Ovary (tissue), 10 donors: ENCODE measurements at regions of chr2 and their contacts with region 1.

Region 1: GRCh38 chr2:63189026-63189425 is 138.4 kb downstream of the OTX1 start:
- DNase-seq: no peak
- H3K4me3 ChIP-seq: no peak overlapping the region
- H3K27ac ChIP-seq: no peak overlapping the region
- H3K4me1 ChIP-seq: no peaks in the 10 kb centered on the region
- H3K27me3 ChIP-seq: no peaks in the 10 kb centered on the region
- CTCF ChIP-seq: no peak
- EP300 ChIP-seq: no peak
- POLR2A ChIP-seq: no peak

Region 2: DNA sequence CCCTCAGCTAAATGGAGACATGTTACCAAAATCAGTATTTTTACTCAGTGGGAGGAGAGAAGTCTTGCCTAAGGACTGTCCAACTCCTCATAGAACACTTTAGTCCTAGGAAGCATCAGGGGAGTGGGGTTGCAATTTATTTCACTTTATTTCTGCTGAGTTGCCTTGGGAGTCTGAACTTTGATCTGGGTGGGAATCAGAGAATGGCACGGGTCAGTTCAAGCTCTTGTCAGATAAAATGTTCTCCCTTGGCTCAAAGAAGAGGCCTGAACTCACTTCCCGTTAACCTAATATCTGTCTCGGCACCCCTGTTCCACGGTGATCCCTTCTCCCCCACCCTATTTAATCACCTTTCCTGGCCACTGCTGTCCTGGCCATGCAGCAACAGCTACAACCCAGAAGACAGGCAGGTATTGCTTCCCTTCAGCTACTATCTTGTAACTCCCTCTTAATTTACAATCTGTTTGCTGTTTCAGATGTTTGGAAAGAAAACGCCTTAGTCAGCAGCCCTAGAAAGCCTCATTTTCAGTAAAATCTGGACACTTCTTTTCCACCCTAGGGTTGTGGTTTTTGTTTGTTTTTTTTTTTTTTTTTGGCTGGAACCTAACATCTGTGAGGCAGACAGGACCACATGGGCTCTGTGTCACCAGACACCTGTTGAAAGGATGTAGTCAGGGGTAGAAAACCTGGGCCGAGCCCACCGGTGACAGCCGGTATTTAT is 1412.2 kb after region 1 on chr2:
- intact Hi-C with region 1: loop called in 1 of 4 experiments (anchors 5 kb)
- DNase-seq: no peak
- H3K4me3 ChIP-seq: no peak overlapping the region
- H3K27ac ChIP-seq: no peak overlapping the region
- H3K4me1 ChIP-seq: peaks cover 2% of the 10 kb centered on the region
- H3K27me3 ChIP-seq: no peaks in the 10 kb centered on the region
- CTCF ChIP-seq: no peak
- EP300 ChIP-seq: no peak
- POLR2A ChIP-seq: no peak